ENCODE measurements at regions of chr16 and their contacts with region 1.

Region 1: DNA sequence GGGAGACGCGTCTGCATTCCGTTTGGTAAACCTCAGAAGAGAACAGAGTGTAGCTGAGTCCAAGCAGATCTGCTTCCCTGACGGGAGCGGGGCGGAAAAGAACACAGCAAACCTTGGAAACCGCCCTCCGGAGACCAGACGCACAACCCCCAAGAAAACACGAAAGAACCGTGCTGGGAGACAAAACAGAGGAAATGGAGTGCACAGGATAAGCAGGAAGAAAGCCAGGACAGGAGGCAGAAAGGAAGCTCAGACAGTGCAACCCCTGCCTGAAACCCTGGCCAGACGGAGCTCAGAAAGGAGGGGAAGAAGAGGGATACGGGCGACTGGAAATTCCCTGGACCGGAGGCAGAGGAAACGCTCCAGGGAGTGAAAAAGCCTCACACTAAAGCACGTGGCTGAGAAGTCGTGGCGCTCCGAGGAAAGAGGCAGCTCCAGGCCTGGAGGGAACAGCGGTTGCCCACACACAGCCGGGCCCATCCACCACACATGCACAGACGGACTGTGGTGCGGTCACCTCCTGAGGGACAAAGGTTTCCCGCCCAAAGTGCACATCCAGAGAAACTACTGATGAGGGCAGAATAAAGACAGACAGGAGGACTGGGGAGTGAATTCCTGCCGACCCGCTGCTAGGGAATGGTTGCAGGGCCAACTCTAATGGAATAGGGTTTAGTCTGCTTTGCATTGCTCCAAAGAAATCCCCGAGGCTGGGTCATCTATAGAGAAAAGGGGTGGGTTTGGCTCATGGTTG is 10.2 kb downstream of the DPEP1 start:
- DNase-seq: no peak
- ATAC-seq: peak; percentile 19; the same call in 1 of the 2 replicates
- H3K4me3 Mint-ChIP-seq: no peak overlapping the region
- H3K27ac Mint-ChIP-seq: peak overlapping the region; percentile 16; the same call in 1 of the 2 replicates
- H3K4me1 Mint-ChIP-seq: peaks cover 24% of the 10 kb centered on the region
- H3K27me3 Mint-ChIP-seq: peaks cover 9% of the 10 kb centered on the region; the same call in 1 of the 2 replicates
- CTCF ChIP-seq: no peak

Region 2: DNA sequence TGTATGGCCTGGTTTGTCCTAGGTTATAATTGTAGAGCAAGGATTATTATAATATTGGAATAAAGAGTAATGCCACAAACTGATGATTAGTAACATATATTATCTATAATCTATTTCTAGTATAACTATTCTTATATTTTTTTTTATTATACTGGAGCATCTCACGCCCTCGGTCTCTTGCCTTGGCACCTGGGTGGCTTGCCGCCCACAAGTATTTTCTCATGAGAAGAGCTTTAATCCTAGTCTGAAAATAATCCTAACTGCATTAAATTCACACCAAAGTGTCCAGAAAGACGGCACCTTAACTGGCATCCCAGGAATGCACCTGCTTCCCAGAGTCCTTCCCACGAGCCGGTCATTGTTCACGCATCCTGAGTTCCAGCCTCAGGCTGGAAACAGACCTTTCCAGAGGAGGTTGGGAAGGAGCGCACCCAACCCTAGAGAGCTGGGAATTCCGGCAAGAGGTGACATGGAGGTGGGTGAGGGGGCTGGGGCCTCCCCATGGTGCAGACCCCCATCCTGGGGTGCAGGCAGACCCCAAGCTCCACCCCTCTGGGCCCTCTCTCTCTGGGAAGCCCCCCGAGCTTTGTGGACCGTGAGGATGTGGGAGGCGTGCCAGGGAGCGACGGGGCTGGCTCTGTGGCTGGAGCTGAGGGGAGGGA is 17.9 kb after region 1 on chr16:
- CTCF ChIA-PET with region 1: interaction called, 14 read pairs
- POLR2A ChIA-PET with region 1: no interaction called
- DNase-seq: no peak
- ATAC-seq: no peak
- H3K4me3 Mint-ChIP-seq: no peak overlapping the region
- H3K27ac Mint-ChIP-seq: no peak overlapping the region
- H3K4me1 Mint-ChIP-seq: peaks cover 7% of the 10 kb centered on the region
- H3K27me3 Mint-ChIP-seq: no peaks in the 10 kb centered on the region
- CTCF ChIP-seq: no peak; the same call in 1 of the 2 replicates

Measured in WTC11 (cell line).